Cardiac septum (tissue), 1 donor: ENCODE measurements at regions of chr11 and their contacts with region 1.

Region 1: DNA sequence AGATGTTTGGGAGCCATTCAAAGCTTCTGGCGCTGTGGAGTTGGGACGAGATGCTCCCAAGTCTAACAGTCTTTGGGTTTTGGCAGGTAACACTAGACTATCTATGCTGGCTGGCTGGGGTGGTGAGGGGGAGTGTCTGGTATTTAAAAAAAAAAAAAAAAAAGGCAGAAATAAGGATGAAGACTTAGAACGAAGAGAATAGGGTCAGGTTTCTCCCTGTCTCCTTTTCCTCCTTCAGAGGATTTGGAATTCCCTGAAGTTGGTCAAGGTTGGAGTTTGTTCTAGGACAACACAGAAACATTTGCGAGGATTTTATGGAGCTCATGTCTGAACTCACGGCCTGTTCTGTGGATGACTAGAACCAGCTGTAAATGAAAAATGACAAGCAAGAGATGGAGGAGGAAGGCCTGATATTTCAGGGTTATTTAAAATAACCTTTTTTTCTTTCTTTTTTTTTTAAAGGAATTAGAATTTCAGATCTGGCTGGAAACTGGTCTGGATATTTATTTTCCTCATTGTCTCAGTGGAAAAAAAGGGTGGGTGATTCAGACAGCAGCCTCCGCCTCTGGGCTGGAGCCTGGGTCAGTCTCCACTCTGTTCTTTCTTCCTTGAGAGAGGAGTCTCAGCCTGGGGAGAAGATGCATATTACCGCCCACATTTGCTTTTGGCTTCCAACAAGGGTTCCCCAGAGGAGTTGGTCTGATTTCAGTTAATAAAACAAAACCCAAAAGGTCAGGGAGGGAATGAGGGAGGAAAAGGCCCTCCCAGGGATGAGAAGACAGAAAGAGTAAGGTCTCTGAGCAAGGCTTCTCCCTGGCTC is 80.1 kb downstream of the USP35 start:
- DNase-seq: peak; percentile 78

Region 2: DNA sequence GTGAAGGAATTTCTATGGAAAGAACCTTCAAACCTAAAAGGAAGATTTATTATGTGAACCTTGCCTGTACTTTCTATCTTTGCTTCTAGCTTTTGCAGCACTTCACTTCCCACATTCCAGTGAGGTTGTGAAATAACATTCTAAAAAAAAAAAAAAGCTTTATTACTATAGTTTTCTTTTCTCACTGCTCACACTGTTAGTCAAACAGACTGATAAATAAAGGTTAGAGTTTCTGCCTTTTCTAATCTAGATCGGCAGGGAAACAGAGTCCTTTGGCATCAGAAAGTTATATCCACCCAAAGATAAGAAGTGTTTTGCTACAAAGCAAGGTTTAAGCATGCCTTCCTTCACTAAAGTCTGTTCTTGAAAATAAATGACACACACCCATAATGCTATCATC is 445.0 kb before region 1 on chr11:
- intact Hi-C with region 1: no loop called
- DNase-seq: no peak

Region 3: GRCh38 chr11:78318321-78319114 is 49.7 kb after region 1 on chr11:
- intact Hi-C with region 1: loop called (anchors 5 kb)
- DNase-seq: no peak

Region 4: DNA sequence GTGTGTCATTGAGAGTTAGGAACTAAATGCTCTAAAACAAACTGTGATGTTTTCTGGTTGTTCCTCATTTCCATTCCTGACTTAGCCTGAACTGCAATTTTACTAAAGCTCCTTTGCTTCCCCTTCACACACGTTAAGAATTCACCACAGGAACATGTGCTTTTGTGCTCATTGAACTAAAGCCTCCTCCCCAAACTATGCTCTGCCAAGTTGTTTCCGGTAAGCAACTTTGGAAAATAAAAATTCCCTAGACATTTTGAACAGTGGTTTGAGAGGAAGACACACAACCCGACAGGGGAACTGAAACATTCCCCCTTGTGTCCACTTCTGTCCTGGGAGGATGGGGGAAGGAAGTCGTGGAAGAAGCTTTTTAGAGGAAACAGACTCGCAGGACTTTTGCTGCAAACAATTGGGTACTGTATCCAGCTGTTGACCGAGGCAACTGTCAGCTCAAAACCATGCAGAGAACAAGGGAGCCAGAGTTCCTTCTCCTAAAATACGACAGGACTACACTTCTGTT is 81.9 kb after region 1 on chr11:
- intact Hi-C with region 1: loop called (anchors 5 kb)
- DNase-seq: no peak

Region 5: GRCh38 chr11:78499971-78500370 is 231.2 kb after region 1 on chr11:
- intact Hi-C with region 1: no loop called
- DNase-seq: no peak